Activated CD4-positive, alpha-beta memory T cell treated with anti-CD3 and anti-CD28 coated beads for 36 hours (primary cell): ENCODE measurements at regions of chr1 and their contacts with region 1.

Region 1: DNA sequence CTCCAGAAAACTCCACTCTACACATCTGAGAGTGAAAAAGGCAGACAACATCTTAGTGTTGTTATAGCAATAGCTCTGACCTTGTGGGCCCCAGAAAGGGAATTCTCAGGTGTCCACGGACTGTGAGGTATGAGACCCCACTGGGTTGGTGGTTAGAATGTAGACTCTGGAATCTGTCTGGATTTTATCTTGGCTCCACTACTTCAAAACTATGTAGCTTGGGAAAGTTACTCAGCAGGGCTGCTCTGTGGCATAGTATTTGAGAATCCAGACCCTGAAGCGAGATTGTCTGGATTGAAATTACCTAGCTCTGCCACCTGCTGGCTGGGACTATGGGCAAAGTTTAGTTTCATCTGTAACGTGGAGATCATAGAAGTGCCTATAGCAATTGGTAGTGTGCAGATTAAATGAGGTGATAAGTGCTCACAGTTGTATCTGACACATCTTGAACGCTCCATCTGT is 25.8 kb downstream of the PRDM2 start:
- DNase-seq: peak; percentile 72
- H3K4me3 Mint-ChIP-seq: no peak overlapping the region
- H3K27ac Mint-ChIP-seq: peak overlapping the region; percentile 50
- H3K4me1 Mint-ChIP-seq: peaks cover 40% of the 10 kb centered on the region
- H3K27me3 Mint-ChIP-seq: no peaks in the 10 kb centered on the region

Region 2: GRCh38 chr1:13662493-13662892 is 63.3 kb before region 1 on chr1:
- CTCF ChIA-PET with region 1: interaction called, 29 read pairs
- POLR2A ChIA-PET with region 1: no interaction called
- intact Hi-C with region 1: loop called (anchors 1 kb)
- DNase-seq: no peak
- H3K4me3 Mint-ChIP-seq: no peak overlapping the region
- H3K27ac Mint-ChIP-seq: no peak overlapping the region
- H3K4me1 Mint-ChIP-seq: peaks cover 4% of the 10 kb centered on the region
- H3K27me3 Mint-ChIP-seq: peaks cover 3% of the 10 kb centered on the region

Region 3: GRCh38 chr1:13694886-13695285 is 30.9 kb before region 1 on chr1:
- CTCF ChIA-PET with region 1: interaction called, 10 read pairs
- POLR2A ChIA-PET with region 1: interaction called, 5 read pairs
- intact Hi-C with region 1: no loop called
- DNase-seq: no peak
- H3K4me3 Mint-ChIP-seq: no peak overlapping the region
- H3K27ac Mint-ChIP-seq: no peak overlapping the region
- H3K4me1 Mint-ChIP-seq: peaks cover 12% of the 10 kb centered on the region
- H3K27me3 Mint-ChIP-seq: peaks cover 8% of the 10 kb centered on the region

Region 4: DNA sequence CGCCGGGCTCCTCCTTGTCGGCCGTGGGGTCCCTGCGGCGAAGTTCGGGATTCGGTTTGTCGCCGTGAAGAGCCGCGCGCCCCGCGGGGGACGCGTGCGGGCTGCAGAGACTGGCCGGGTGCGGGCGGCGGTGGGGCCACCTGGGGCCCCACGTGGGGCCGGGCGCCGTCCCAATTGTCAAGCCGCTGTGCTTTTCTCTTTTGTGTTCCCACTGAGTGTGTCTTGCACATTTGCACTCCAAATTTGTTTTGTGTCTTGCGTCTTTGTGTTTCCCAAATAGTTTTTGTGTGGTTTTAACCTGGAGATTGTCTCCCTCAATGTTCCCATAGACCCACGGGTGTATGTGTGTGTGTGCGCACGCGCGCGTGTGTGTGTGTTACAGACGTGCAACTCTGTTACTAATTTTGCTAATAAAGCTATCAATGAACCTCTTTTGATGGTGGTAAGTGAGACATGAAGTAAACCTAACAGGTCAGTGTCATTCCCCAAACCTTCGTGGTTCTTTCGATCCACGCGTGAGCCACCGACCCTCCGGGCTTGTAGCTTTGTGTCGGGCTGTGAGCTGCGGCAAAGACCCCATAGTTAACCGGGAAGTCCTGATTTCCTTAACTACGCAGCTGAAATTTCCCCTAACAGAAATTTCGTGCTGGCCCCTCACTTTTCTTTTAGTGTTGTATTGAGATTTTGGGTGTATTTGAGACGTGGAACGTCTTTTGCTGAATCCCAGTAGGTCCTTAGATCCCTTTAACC is 25.0 kb before region 1 on chr1:
- CTCF ChIA-PET with region 1: interaction called, 28 read pairs
- POLR2A ChIA-PET with region 1: interaction called, 6 read pairs
- intact Hi-C with region 1: loop called (anchors 1 kb)
- DNase-seq: peak; percentile 54
- H3K4me3 Mint-ChIP-seq: peak overlapping the region; percentile 91
- H3K27ac Mint-ChIP-seq: peak overlapping the region; percentile 97
- H3K4me1 Mint-ChIP-seq: peaks cover 47% of the 10 kb centered on the region
- H3K27me3 Mint-ChIP-seq: no peaks in the 10 kb centered on the region

Region 5: DNA sequence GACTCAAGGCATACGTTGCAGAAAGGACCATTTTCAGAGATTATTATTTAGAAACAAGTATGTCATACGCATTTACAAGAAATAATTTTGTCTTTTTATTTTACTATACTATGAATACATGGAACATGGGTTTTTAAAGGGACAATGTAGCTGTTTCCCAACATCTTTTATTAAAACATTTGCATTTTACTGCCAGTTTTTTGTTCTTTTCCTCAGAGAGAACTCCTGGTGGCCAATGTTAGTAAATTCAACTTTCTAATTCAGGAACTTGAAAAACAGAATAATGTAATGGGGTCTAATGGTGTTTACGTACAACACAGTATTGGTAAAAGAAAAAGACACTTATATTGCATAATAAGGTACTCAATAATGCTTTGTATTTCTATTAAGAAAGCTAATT is 10.9 kb before region 1 on chr1:
- CTCF ChIA-PET with region 1: interaction called, 12 read pairs
- POLR2A ChIA-PET with region 1: no interaction called
- intact Hi-C with region 1: no loop called
- DNase-seq: no peak
- H3K4me3 Mint-ChIP-seq: no peak overlapping the region
- H3K27ac Mint-ChIP-seq: no peak overlapping the region
- H3K4me1 Mint-ChIP-seq: peaks cover 19% of the 10 kb centered on the region
- H3K27me3 Mint-ChIP-seq: no peaks in the 10 kb centered on the region

Region 6: GRCh38 chr1:13836136-13836535 is 110.4 kb after region 1 on chr1:
- CTCF ChIA-PET with region 1: no interaction called
- POLR2A ChIA-PET with region 1: no interaction called
- intact Hi-C with region 1: no loop called
- DNase-seq: no peak
- H3K4me3 Mint-ChIP-seq: no peak overlapping the region
- H3K27ac Mint-ChIP-seq: no peak overlapping the region
- H3K4me1 Mint-ChIP-seq: no peaks in the 10 kb centered on the region
- H3K27me3 Mint-ChIP-seq: peaks cover 12% of the 10 kb centered on the region

Region 7: GRCh38 chr1:14267991-14268390 is 542.2 kb after region 1 on chr1:
- CTCF ChIA-PET with region 1: no interaction called
- POLR2A ChIA-PET with region 1: no interaction called
- intact Hi-C with region 1: no loop called
- DNase-seq: no peak
- H3K4me3 Mint-ChIP-seq: no peak overlapping the region
- H3K27ac Mint-ChIP-seq: no peak overlapping the region
- H3K4me1 Mint-ChIP-seq: no peaks in the 10 kb centered on the region
- H3K27me3 Mint-ChIP-seq: peaks cover 10% of the 10 kb centered on the region